ENCODE measurements at regions of chr11 and their contacts with region 1.

Region 1: GRCh38 chr11:128323381-128323780 is 264.0 kb downstream of the ETS1 start:
- DNase-seq: peak; percentile 65
- H3K4me3 Mint-ChIP-seq: no peak overlapping the region
- H3K27ac Mint-ChIP-seq: peak overlapping the region; percentile 98
- H3K4me1 Mint-ChIP-seq: peaks cover 89% of the 10 kb centered on the region
- H3K27me3 Mint-ChIP-seq: no peaks in the 10 kb centered on the region

Region 2: DNA sequence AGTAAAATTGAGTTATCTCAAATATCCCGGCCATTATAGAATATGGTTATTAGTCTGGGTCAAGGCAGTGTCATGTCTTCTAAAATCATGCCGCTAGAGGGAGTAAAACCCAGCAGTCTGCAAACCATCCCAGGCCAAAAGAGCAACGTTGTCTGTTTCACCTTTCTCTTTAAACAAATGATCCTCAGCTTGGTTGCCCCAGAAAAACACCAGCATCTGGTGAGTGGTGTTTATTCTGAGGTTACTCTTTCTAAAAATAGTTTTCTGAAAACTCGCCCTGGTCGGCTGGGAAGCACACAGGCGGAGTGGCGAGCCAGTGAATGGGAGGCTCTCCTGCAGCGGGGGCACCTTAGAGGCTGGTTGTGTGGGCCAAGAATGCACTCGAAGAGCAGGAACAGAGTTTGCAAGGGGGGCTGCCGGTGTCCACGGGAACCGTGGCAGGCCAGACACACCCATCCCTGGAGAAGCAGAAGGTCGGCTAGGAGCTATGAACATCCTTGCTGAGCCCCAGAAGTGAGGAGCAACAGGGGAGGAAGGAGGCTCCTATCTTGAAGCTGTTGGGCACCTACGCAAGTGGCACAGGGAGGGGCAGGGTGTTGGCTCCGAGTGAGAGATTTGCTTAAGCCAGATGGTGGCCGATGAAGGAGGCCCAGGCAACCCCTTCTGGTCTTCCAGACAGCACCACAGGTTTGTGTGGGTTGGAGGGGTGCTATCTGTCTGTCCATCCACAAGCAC is 33.1 kb before region 1 on chr11:
- CTCF ChIA-PET with region 1: interaction called, 125 read pairs
- POLR2A ChIA-PET with region 1: interaction called, 4 read pairs
- DNase-seq: peak; percentile 86
- H3K4me3 Mint-ChIP-seq: peak overlapping the region; percentile 83
- H3K27ac Mint-ChIP-seq: peak overlapping the region; percentile 94
- H3K4me1 Mint-ChIP-seq: peaks cover 90% of the 10 kb centered on the region
- H3K27me3 Mint-ChIP-seq: peaks cover 2% of the 10 kb centered on the region

Region 3: DNA sequence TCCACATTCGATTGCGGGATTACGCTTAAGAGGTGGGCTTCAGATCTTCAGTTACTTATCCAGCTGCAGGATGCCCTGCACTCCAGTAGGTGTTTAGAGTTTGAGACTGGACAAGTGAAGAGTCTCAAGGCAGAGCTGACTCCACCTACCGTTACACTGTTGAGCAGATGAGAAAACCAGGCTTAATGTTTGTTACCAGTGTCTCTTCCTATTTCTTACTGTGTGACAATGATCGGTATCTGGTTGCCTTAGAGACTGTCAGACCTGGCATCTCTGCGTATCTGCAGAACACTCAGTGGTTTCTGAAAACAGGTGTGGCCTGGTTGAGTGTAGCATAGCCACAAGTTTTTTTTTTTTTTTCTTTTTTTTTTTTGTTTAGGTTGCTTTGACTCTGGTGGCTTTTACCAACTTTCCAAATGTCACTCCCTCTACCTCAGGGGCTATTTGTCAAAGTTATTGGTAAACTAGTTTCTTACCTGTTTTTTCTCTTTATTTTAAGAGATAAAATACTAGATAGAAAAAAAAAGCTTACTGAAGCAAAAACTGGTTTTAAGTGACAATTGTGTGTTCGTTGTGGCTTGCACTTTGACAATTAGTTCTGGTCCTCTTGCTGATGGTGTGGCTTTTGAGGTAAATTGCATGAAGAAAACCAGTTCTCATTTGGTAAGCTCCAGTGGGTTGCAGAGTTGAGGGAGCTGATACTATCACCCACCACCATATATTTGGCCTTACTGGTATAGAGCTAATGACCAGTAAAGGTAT is 20.8 kb before region 1 on chr11:
- CTCF ChIA-PET with region 1: interaction called, 125 read pairs
- POLR2A ChIA-PET with region 1: interaction called, 3 read pairs
- DNase-seq: peak; percentile 92
- H3K4me3 Mint-ChIP-seq: peak overlapping the region; percentile 82
- H3K27ac Mint-ChIP-seq: peak overlapping the region; percentile 91
- H3K4me1 Mint-ChIP-seq: peaks cover 75% of the 10 kb centered on the region
- H3K27me3 Mint-ChIP-seq: no peaks in the 10 kb centered on the region

Region 4: GRCh38 chr11:128310005-128310404 is 13.4 kb before region 1 on chr11:
- CTCF ChIA-PET with region 1: interaction called, 16 read pairs
- POLR2A ChIA-PET with region 1: interaction called, 3 read pairs
- DNase-seq: no peak
- H3K4me3 Mint-ChIP-seq: no peak overlapping the region
- H3K27ac Mint-ChIP-seq: peak overlapping the region; percentile 60
- H3K4me1 Mint-ChIP-seq: peaks cover 73% of the 10 kb centered on the region
- H3K27me3 Mint-ChIP-seq: no peaks in the 10 kb centered on the region

Region 5: DNA sequence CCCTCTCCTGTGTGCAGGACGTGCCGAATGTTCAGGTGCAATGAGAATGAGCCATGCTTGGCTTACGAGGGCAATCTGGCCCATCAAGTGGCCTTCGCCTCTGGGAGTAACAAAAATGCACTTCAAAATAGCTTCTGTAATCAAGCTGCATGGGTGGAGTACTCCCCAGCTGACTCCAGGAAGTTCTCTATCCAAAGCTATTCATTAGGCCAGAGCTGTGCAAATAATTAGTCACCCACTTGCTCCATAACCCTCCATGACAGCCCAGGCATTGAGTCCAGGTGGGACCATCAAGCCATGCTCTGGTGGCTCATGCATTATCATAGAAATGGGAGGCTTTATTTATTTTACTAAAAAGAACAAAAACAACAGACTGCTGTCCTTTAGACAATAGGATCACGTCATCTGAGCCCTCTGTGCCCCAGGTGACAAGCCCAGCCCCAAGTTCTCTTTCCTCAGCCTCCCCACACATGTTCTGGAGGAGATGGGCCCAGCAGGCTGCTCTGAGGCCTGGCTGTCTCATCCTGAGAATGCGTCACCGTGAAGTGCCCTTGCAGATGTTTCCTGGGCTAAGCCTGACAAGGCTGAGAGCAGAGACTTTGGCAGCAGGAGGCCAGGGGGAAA is 19.2 kb after region 1 on chr11:
- CTCF ChIA-PET with region 1: interaction called, 132 read pairs
- POLR2A ChIA-PET with region 1: no interaction called
- DNase-seq: peak; percentile 62
- H3K4me3 Mint-ChIP-seq: peak overlapping the region; percentile 66
- H3K27ac Mint-ChIP-seq: peak overlapping the region; percentile 98
- H3K4me1 Mint-ChIP-seq: peaks cover 78% of the 10 kb centered on the region
- H3K27me3 Mint-ChIP-seq: no peaks in the 10 kb centered on the region

Region 6: GRCh38 chr11:128472128-128473089 is 149.0 kb after region 1 on chr11:
- CTCF ChIA-PET with region 1: interaction called, 10 read pairs
- POLR2A ChIA-PET with region 1: interaction called, 3 read pairs
- DNase-seq: peak; percentile 72
- H3K4me3 Mint-ChIP-seq: peak overlapping the region; percentile 70
- H3K27ac Mint-ChIP-seq: peak overlapping the region; percentile 95
- H3K4me1 Mint-ChIP-seq: peaks cover 96% of the 10 kb centered on the region
- H3K27me3 Mint-ChIP-seq: no peaks in the 10 kb centered on the region

Region 7: GRCh38 chr11:128603752-128604414 is 280.5 kb after region 1 on chr11:
- CTCF ChIA-PET with region 1: no interaction called
- POLR2A ChIA-PET with region 1: no interaction called
- DNase-seq: no peak
- H3K4me3 Mint-ChIP-seq: no peak overlapping the region
- H3K27ac Mint-ChIP-seq: no peak overlapping the region
- H3K4me1 Mint-ChIP-seq: peaks cover 19% of the 10 kb centered on the region
- H3K27me3 Mint-ChIP-seq: no peaks in the 10 kb centered on the region

Measured in activated CD4-positive, alpha-beta T cell treated with anti-CD3 and anti-CD28 coated beads, Interleukin-2, amount 10 ng/mL, durations not matched to agents 7 days and 5 days (primary cell).